Panc1 (cell line): ENCODE measurements at regions of chr6 and their contacts with region 1.

Region 1: GRCh38 chr6:45398075-45398839 is 20.5 kb upstream of the SUPT3H start:
- DNase-seq: no peak
- ATAC-seq: no peak
- H3K4me3 ChIP-seq: no peak overlapping the region
- H3K27ac ChIP-seq: no peak overlapping the region
- H3K4me1 ChIP-seq: no peaks in the 10 kb centered on the region
- H3K27me3 ChIP-seq: peaks cover 5% of the 10 kb centered on the region
- CTCF ChIP-seq: no peak

Region 2: GRCh38 chr6:45366534-45366933 is 31.7 kb before region 1 on chr6:
- CTCF ChIA-PET with region 1: no interaction called
- POLR2A ChIA-PET with region 1: interaction called, 24 read pairs
- in situ Hi-C with region 1: no loop called
- intact Hi-C with region 1: no loop called
- DNase-seq: no peak
- ATAC-seq: no peak
- H3K4me3 ChIP-seq: no peak overlapping the region
- H3K27ac ChIP-seq: no peak overlapping the region
- H3K4me1 ChIP-seq: no peaks in the 10 kb centered on the region
- H3K27me3 ChIP-seq: no peaks in the 10 kb centered on the region
- CTCF ChIP-seq: no peak

Region 3: DNA sequence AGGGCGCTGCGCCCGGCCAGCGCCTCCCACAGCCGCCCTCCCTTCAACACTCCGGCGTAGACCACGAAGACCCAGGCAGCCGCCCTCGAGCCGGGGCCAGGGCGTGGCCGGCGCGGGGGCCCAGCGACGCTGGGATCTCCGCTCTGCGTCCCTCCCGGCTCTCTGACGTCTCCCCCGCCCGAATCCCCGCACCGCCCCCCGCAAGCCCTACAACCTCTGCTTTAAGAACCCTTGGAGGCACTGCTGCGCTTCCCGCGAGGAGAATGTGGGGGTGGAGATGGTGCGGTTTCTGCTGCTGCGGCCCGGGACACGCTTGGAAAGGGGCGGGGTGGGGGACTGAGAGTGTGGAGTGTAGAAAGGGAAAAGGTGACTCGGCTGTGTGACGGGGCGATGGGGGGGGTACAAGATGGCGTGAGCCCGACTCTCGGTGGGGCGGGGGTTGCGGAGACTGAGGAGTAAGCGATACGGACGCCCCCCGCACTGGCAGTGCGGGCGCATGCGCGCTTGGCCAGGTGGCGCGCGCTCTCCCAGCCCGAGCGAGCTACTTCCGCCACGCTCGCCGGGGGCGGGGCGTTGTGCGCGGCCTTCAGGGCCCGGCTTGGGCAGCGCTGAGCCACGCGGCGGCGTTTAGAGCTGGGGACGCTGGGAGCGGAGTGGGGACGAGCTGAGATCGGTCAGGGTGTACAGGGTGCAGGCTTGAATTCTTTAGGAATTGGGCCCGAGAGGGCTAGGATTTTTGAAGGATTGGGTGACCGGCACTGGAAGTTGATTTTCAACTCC is 20.5 kb before region 1 on chr6 and contains the start of gene SUPT3H:
- CTCF ChIA-PET with region 1: no interaction called
- POLR2A ChIA-PET with region 1: no interaction called
- in situ Hi-C with region 1: no loop called
- intact Hi-C with region 1: no loop called
- DNase-seq: peak; percentile 53
- ATAC-seq: peak; percentile 96
- H3K4me3 ChIP-seq: peak within 1 kb of the TSS; percentile 84 to 93
- H3K27ac ChIP-seq: peak within 1 kb of the TSS; percentile 96
- H3K4me1 ChIP-seq: peaks cover 15% of the 10 kb centered on the region
- H3K27me3 ChIP-seq: no peaks in the 10 kb centered on the region
- CTCF ChIP-seq: peak; percentile 32
- total RNA-seq, gene SUPT3H: 11.0 TPM

Region 4: GRCh38 chr6:45415315-45415714 is 17.1 kb after region 1 on chr6:
- CTCF ChIA-PET with region 1: no interaction called
- POLR2A ChIA-PET with region 1: no interaction called
- in situ Hi-C with region 1: no loop called
- intact Hi-C with region 1: no loop called
- DNase-seq: no peak
- ATAC-seq: no peak
- H3K4me3 ChIP-seq: no peak overlapping the region
- H3K27ac ChIP-seq: no peak overlapping the region
- H3K4me1 ChIP-seq: peaks cover 4% of the 10 kb centered on the region
- H3K27me3 ChIP-seq: no peaks in the 10 kb centered on the region
- CTCF ChIP-seq: no peak

Region 5: GRCh38 chr6:45681860-45682511 is 283.7 kb after region 1 on chr6:
- CTCF ChIA-PET with region 1: no interaction called
- POLR2A ChIA-PET with region 1: no interaction called
- in situ Hi-C with region 1: no loop called
- intact Hi-C with region 1: no loop called
- DNase-seq: no peak
- ATAC-seq: no peak
- H3K4me3 ChIP-seq: no peak overlapping the region
- H3K27ac ChIP-seq: no peak overlapping the region
- H3K4me1 ChIP-seq: peaks cover 13% of the 10 kb centered on the region
- H3K27me3 ChIP-seq: no peaks in the 10 kb centered on the region
- CTCF ChIP-seq: no peak